HEK293 (cell line): ENCODE measurements at regions of chr2 and their contacts with region 1.

Region 1: GRCh38 chr2:85032621-85033020 is 61.7 kb downstream of the KCMF1 start:
- H3K4me3 ChIP-seq: no peak overlapping the region
- H3K27ac ChIP-seq: no peak overlapping the region
- H3K4me1 ChIP-seq: no peaks in the 10 kb centered on the region
- CTCF ChIP-seq: no peak

Region 2: GRCh38 chr2:84757648-84758047 is 275.0 kb before region 1 on chr2:
- CTCF ChIA-PET with region 1: no interaction called
- POLR2A ChIA-PET with region 1: interaction called, 10 read pairs
- H3K4me3 ChIP-seq: no peak overlapping the region
- H3K27ac ChIP-seq: no peak overlapping the region
- H3K4me1 ChIP-seq: no peaks in the 10 kb centered on the region
- CTCF ChIP-seq: no peak